ENCODE measurements at regions of chr3 and their contacts with region 1.

Region 1: DNA sequence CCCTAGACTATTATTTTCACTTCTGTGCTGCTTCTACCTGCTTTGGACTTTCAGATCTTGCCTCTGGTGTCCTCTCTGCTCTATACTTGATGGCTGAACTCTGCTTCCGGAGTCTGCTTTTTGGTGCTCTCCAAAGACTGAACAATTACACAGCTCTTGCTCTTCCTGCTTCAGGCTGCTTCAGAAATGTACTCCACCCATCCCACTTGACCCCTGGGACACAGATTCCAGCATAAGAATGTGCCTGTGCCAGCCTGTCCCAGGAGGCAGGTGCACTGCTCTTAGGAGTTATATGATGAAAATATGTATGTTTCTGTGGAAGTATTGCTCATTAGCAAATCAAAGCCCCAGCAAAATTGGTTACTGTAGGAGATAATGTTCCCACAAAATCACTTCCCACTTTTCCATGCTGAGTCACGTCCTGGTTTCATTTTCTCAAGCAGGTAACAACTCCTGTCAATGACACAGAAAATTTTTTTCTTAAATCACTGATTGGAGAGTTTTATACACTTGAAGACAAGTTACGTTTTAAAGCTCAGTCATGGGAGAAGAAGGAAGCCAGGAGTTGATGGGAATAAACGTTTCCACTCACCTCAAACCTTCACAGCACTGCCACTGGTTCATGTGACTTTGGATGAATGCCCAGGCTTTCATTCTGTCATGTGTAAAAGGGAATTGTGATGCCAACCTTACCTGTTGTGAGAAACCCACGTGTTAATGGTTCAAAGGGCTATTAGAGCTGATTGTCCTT is 239.4 kb upstream of the ZPLD1 start:
- DNase-seq: peak in 1 of 5 donors; percentile 26
- ATAC-seq: peak in 3 of 4 donors; percentile 41 to 77 (median 64)
- H3K4me3 ChIP-seq: no peak overlapping the region
- H3K27ac ChIP-seq: peak overlapping the region in 7 of 12 donors; percentile 6 to 54 (median 26)
- H3K4me1 ChIP-seq: peaks cover 0 to 12% (median 4%) of the 10 kb centered on the region in 12 donors
- H3K27me3 ChIP-seq: no peaks in the 10 kb centered on the region
- CTCF ChIP-seq: no peak
- POLR2A ChIP-seq: no peak

Region 2: DNA sequence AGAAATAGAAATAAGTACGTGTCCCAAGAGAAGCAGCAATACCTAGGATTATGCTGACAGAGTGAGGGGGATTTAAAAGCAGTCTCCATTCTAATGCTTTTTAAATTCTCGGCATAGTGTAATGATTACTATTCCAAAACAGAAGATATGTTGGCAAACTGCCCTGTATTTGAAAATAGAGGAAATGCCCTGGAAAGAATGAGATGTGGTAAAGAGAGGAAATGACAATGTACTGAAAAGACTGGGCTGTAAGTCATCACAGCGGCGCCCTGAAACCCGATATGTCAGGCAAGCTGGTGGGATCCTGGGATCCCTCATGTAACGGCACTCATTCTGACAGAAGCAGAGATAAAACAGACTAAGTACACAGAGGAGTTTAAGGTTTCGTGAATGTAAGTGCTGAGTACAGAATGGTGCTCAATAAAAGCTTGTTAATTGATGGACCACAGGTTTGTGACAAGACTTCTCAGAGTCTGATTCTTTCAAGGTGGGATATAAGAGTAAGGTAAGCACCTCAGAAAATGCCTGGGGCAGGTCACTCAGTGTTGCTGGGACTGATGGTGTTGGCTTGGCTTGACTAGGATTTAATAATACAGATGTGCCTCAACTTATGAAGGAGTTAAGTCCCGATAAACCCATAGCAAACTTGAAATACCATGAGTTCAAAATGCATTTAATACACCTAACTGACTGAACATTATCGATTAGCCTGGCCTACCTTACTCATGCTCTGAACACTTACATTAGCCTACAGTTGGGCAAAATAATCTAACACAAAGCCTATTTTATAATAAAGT is 254.7 kb before region 1 on chr3:
- intact Hi-C with region 1: loop called in 1 of 10 experiments (anchors 10 kb)
- DNase-seq: peak; percentile 47 to 78 (median 72)
- ATAC-seq: peak; percentile 85 to 97 (median 94)
- H3K4me3 ChIP-seq: peak overlapping the region in 6 of 12 donors; percentile 1 to 22 (median 8)
- H3K27ac ChIP-seq: peak overlapping the region in 8 of 12 donors; percentile 17 to 82 (median 47)
- H3K4me1 ChIP-seq: peaks cover 0 to 73% (median 27%) of the 10 kb centered on the region in 12 donors
- H3K27me3 ChIP-seq: no peaks in the 10 kb centered on the region
- CTCF ChIP-seq: no peak
- POLR2A ChIP-seq: no peak